Endothelial cell of umbilical vein (primary cell): ENCODE measurements at regions of chr14 and their contacts with region 1.

Region 1: GRCh38 chr14:60980811-60981632 is at the starts of genes SLC38A6 and TRMT5:
- DNase-seq: peak; percentile 98
- H3K4me3 ChIP-seq: peak within 1 kb of the TSS; percentile 27 to 72 (median 61)
- H3K27ac ChIP-seq: peak within 1 kb of the TSS; percentile 83
- H3K4me1 ChIP-seq: peaks cover 46% of the 10 kb centered on the region
- H3K27me3 ChIP-seq: no peaks in the 10 kb centered on the region
- CTCF ChIP-seq: no peak
- POLR2A ChIP-seq: peak; percentile 51
- total RNA-seq, gene SLC38A6: 21.6 and 24.6 TPM in 2 replicates
- total RNA-seq, gene TRMT5: 12.6 and 13.5 TPM in 2 replicates

Region 2: GRCh38 chr14:60656686-60657455 is 324.2 kb before region 1 on chr14:
- CTCF ChIA-PET with region 1: interaction called, 4 read pairs
- POLR2A ChIA-PET with region 1: no interaction called
- dilution Hi-C with region 1: no loop called
- intact Hi-C with region 1: loop called (anchors 2 kb)
- DNase-seq: peak; percentile 65
- H3K4me3 ChIP-seq: peak overlapping the region; percentile 22 to 64 (median 59)
- H3K27ac ChIP-seq: peak overlapping the region; percentile 3
- H3K4me1 ChIP-seq: peaks cover 10% of the 10 kb centered on the region
- H3K27me3 ChIP-seq: peaks cover 35 to 44% of the 10 kb centered on the region in 2 experiments
- CTCF ChIP-seq: peak; percentile 39 to 59
- POLR2A ChIP-seq: no peak

Region 3: GRCh38 chr14:60734465-60735242 is 246.4 kb before region 1 on chr14 and contains the start of gene MNAT1:
- CTCF ChIA-PET with region 1: interaction called, 3 read pairs
- POLR2A ChIA-PET with region 1: no interaction called
- dilution Hi-C with region 1: no loop called
- intact Hi-C with region 1: loop called (anchors 1 kb)
- DNase-seq: peak; percentile 90
- H3K4me3 ChIP-seq: peak within 1 kb of the TSS; percentile 38 to 75 (median 59)
- H3K27ac ChIP-seq: peak within 1 kb of the TSS; percentile 32
- H3K4me1 ChIP-seq: peaks cover 16% of the 10 kb centered on the region
- H3K27me3 ChIP-seq: peaks cover 9 to 25% of the 10 kb centered on the region in 2 experiments
- CTCF ChIP-seq: no peak
- POLR2A ChIP-seq: peak; percentile 77
- total RNA-seq, gene MNAT1: 55.7 and 58.0 TPM in 2 replicates

Region 4: DNA sequence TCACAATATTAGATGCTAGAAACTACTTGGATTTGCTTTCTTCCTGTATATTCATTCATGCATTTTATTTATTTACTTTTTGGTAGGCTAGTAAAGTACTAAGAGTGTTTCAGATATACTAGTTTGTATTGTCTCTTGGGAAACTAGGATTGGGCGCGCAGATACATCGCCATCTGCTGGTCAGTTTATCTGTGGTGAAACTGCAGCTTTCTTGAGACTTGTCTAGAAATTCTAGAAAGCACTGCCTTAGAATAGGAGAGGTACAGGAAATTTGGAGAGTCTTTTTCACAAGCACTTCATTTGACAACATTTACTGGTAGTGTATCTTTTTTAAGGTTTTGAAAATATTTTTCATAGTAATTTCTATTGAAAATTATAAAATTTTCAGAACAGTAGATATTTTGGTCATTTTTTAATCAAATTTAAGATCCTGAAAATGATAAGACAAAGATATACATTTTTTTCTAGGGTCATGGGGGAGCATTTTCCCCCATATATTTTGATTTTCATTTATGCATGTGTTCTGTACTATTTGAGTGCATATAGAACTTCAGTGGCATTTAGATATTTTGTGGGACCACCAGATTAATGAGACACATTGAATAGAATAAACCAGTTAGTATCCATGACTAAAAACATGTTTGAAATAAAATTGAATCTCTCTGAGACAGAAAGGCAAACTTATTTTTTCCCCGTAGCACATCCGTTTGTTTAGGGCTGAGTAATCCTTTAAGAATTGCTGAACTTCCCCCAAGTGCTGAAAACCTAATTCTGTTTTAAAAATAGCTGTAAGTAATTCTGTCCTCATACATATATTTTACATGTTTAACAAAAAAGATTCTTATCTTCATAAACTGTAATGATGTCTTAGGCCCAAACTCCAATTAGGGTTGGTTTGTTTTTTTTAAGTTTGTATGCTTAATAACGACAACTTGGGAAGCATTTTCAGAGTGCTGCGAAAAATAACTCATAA is 44.5 kb after region 1 on chr14:
- CTCF ChIA-PET with region 1: interaction called, 5 read pairs
- POLR2A ChIA-PET with region 1: interaction called, 3 read pairs
- dilution Hi-C with region 1: no loop called
- intact Hi-C with region 1: loop called (anchors 1 kb)
- DNase-seq: peak; percentile 80
- H3K4me3 ChIP-seq: peak overlapping the region in 1 of 3 experiments; percentile 46
- H3K27ac ChIP-seq: peak overlapping the region; percentile 89
- H3K4me1 ChIP-seq: peaks cover 21% of the 10 kb centered on the region
- H3K27me3 ChIP-seq: no peaks in the 10 kb centered on the region
- CTCF ChIP-seq: peak; percentile 66 to 68
- POLR2A ChIP-seq: no peak

Region 5: GRCh38 chr14:61037215-61037614 is 56.2 kb after region 1 on chr14:
- CTCF ChIA-PET with region 1: no interaction called
- POLR2A ChIA-PET with region 1: no interaction called
- dilution Hi-C with region 1: no loop called
- intact Hi-C with region 1: no loop called
- DNase-seq: no peak
- H3K4me3 ChIP-seq: no peak overlapping the region
- H3K27ac ChIP-seq: no peak overlapping the region
- H3K4me1 ChIP-seq: peaks cover 3% of the 10 kb centered on the region
- H3K27me3 ChIP-seq: no peaks in the 10 kb centered on the region
- CTCF ChIP-seq: no peak
- POLR2A ChIP-seq: no peak

Region 6: GRCh38 chr14:61090432-61091216 is 109.6 kb after region 1 on chr14:
- CTCF ChIA-PET with region 1: no interaction called
- POLR2A ChIA-PET with region 1: no interaction called
- dilution Hi-C with region 1: no loop called
- intact Hi-C with region 1: no loop called
- DNase-seq: no peak
- H3K4me3 ChIP-seq: no peak overlapping the region
- H3K27ac ChIP-seq: no peak overlapping the region
- H3K4me1 ChIP-seq: no peaks in the 10 kb centered on the region
- H3K27me3 ChIP-seq: no peaks in the 10 kb centered on the region
- CTCF ChIP-seq: no peak
- POLR2A ChIP-seq: no peak

Region 7: DNA sequence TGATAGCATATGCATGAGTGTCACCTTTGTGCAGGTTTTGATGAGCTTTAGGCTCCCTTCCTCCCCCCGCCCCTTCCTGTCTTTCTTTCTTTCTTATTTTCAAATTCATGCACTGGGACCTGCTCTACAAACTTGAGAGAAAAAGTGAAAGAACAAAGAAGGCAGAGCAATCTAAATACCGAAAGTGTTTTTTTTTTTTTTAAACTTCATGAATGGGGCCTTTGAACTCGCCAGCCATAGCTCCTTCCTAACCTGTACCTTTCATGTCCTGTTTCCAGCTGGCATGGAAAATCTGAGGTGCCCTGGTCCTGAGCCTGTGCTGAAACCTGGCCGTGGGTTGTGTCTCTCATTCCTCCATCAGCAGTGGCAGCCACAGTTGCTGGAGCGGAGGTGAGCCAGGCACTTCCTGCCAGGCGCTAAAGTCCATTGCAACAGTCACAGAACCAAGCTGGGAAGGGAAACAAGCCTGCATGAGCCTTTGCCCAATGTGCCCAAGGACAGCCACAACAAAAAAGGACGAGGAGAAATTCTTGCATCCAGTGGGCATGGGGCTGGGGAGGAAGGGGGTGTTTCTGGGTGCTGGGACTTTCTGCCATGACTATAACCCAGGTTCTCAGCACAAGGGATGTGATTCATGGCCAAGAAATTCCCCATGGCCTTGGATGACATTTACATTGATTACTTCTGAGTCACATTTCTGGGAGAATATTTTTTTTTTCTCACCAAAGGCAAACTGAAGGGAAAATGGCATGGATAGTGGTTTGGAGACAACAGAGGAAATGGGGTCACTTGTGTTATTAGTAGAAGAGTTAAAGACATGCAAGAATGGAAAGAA is 197.4 kb after region 1 on chr14:
- CTCF ChIA-PET with region 1: no interaction called
- POLR2A ChIA-PET with region 1: interaction called, 4 read pairs
- dilution Hi-C with region 1: no loop called
- intact Hi-C with region 1: loop called (anchors 2 kb)
- DNase-seq: peak; percentile 95
- H3K4me3 ChIP-seq: peak overlapping the region in 1 of 3 experiments; percentile 42
- H3K27ac ChIP-seq: peak overlapping the region; percentile 99
- H3K4me1 ChIP-seq: peaks cover 40% of the 10 kb centered on the region
- H3K27me3 ChIP-seq: no peaks in the 10 kb centered on the region
- CTCF ChIP-seq: no peak
- POLR2A ChIP-seq: peak; percentile 45